AG04449 (cell line): ENCODE measurements at regions of chr1 and their contacts with region 1.

Region 1: DNA sequence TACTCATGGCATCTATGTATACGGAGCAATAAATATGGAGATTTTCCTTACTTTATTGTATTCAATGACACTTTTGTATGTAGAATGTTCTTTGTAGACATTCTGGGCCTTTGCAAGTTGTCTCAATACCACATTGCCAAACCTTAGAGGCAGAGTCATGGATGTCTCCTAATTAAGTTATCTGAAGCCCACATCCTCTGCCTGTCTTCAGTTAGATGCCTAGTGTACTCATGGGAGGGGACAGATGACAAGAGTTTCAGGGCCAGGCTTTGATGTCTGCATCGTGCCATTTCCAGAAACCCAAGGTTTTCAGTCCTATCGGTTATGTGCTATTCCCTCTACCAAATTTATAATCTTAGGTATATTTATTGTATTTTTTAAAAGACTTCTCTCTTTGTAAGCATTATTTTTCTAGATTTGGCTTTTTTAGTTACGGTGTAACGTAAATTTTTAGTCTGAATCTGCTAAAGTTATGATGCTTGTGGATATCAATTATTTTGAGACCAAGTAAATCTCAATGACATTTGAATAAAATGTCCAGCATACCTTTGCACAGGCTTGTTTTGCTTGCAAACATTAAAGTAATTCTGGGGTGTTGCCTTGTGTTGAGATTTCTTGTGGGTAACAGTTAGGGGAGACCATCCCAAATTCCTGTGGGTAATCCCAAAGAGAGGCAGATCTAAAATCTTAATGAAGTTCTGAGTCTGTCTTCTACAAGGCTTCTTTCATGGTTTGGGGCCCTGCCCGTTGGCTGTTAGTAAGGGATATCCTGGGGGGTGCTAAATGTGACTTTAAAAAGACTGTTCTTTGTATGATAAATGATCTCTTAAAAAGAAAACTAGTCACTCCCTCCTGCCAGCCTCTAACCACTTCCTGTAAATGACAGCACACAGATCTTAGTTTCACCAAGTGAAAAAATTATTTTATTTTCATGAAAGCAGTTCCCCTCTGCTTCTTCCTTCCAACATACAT is 8.0 kb upstream of the MACF1 start:
- DNase-seq: no peak
- H3K4me3 ChIP-seq: no peak overlapping the region
- CTCF ChIP-seq: no peak

Region 2: DNA sequence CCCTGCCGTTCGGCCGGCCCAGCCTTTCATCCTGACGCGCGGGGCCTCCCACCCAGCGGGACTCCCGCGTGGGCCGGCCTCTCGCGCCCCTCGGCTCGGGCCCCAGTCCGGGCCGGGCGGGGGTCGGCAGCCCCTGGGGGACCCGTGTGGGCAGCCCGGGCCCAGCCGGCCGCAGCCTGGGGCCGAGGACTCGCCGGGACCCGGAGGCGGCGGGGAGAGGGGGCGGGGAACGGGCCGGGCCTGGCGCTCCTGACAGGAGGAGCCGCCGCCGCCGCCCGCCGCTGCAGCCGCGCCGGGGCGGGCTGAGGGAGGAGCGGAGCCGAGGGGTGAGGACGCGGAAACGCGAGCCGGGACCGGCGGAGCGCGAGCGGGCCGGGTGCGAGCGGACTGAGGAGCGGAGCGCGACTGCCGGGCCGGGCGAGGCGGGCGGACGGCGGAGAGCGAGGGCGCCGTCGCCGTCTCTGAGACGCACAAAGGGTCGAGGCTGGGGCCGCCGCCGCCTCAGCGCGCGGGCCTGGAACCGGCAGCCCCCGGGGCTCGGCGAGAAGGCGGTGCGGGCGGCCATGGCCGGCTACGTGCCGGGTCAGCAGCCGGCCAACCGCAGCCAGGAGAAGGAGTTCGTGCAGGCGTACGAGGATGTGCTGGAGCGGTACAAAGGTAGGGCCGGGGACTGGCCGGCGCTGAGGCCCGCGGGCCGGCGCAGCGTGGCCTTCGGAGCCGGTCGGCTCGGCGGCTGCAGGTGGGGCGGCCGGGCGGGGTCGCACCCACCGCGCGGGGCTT is 91.3 kb before region 1 on chr1:
- CTCF ChIA-PET with region 1: interaction called, 81 read pairs
- POLR2A ChIA-PET with region 1: interaction called, 11 read pairs
- DNase-seq: no peak
- H3K4me3 ChIP-seq: peak overlapping the region; percentile 79
- CTCF ChIP-seq: no peak

Region 3: GRCh38 chr1:39142401-39143151 is 54.0 kb before region 1 on chr1:
- CTCF ChIA-PET with region 1: interaction called, 23 read pairs
- POLR2A ChIA-PET with region 1: interaction called, 3 read pairs
- DNase-seq: no peak
- H3K4me3 ChIP-seq: no peak overlapping the region
- CTCF ChIP-seq: no peak

Region 4: GRCh38 chr1:39165049-39165448 is 31.5 kb before region 1 on chr1:
- CTCF ChIA-PET with region 1: interaction called, 31 read pairs
- POLR2A ChIA-PET with region 1: no interaction called
- DNase-seq: no peak
- H3K4me3 ChIP-seq: no peak overlapping the region
- CTCF ChIP-seq: no peak

Region 5: GRCh38 chr1:39238476-39238875 is 41.9 kb after region 1 on chr1:
- CTCF ChIA-PET with region 1: interaction called, 11 read pairs
- POLR2A ChIA-PET with region 1: no interaction called
- DNase-seq: peak; percentile 65
- H3K4me3 ChIP-seq: no peak overlapping the region
- CTCF ChIP-seq: no peak

Region 6: DNA sequence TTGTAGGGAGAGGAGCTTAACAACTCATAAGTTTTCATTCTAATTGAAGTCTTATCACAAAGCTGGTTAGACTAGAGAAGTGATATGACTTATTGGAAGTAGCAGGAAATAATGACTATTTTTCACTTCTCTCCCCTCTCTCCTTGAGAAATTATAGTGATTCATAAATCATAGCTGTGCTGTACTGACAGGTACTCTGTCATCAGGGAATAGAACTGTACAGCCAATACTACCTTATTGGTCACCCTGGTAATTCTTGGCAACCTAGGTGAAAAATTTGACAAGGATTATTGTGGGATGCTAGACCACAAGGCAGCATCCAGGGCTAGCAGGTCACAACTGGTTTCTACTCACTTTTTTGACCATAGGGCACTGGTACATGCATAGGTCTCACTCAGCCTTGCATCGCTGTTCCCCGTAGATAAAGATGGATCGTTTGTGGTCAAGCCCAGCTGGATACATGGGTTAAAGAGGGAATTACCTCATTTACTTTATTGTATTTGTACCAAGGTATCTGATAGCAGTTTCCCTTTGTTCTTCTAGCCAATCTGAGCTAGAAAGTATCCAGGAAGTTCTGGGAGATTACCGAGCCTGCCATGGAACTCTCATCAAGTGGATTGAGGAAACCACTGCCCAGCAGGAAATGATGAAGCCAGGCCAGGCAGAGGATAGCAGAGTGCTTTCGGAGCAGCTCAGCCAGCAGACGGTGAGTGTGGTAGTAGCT is 121.5 kb after region 1 on chr1:
- CTCF ChIA-PET with region 1: interaction called, 12 read pairs
- POLR2A ChIA-PET with region 1: no interaction called
- DNase-seq: no peak
- H3K4me3 ChIP-seq: no peak overlapping the region
- CTCF ChIP-seq: no peak